ENCODE measurements at regions of chr21 and their contacts with region 1.

Region 1: GRCh38 chr21:25396135-25396711 is 211.1 kb downstream of the MRPL39 start:
- DNase-seq: peak; percentile 89
- H3K4me3 Mint-ChIP-seq: peak overlapping the region; percentile 24
- H3K27ac Mint-ChIP-seq: peak overlapping the region; percentile 77
- H3K4me1 Mint-ChIP-seq: peaks cover 15% of the 10 kb centered on the region
- H3K27me3 Mint-ChIP-seq: no peaks in the 10 kb centered on the region

Region 2: GRCh38 chr21:25360593-25360992 is 35.6 kb before region 1 on chr21:
- CTCF ChIA-PET with region 1: no interaction called
- POLR2A ChIA-PET with region 1: no interaction called
- intact Hi-C with region 1: loop called (anchors 1 kb)
- DNase-seq: peak; percentile 13
- H3K4me3 Mint-ChIP-seq: no peak overlapping the region
- H3K27ac Mint-ChIP-seq: no peak overlapping the region
- H3K4me1 Mint-ChIP-seq: peaks cover 18% of the 10 kb centered on the region
- H3K27me3 Mint-ChIP-seq: peaks cover 2% of the 10 kb centered on the region

Region 3: DNA sequence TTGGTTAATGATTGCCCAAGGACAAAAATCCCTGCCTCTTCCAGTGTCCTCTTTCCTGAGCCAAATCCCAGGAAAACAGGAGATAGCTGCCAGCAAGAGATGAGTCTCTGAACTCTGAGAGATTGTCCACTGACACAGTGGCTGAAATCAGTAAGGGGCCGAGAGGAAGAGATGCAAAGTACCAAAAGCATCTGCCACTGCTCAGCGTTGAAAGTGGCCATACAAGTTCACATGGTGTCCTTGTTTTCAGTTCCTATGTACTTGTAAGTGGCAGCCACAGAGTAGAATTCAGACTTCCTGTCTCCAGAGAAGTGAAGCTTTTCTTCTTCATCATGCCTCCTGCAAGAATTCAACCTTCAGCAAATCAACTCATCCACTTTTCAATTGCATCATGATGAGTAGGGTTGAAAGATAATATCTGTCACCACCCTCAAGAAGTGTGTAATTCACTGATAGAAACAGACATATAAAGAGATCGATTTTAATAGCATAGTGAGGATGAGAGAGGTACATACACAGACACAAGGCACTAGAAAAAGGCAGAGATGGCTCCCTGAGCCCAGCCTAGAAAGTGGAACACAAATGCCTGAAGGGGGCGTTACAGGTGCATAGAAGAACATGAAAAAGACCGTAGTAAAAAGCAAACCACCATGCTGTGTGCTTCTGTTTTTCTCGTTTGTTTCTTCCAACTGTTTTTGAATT is 25.3 kb after region 1 on chr21:
- CTCF ChIA-PET with region 1: interaction called, 3 read pairs
- POLR2A ChIA-PET with region 1: interaction called, 6 read pairs
- intact Hi-C with region 1: loop called (anchors 1 kb)
- DNase-seq: peak; percentile 79
- H3K4me3 Mint-ChIP-seq: peak overlapping the region; percentile 67
- H3K27ac Mint-ChIP-seq: peak overlapping the region; percentile 89
- H3K4me1 Mint-ChIP-seq: peaks cover 62% of the 10 kb centered on the region
- H3K27me3 Mint-ChIP-seq: no peaks in the 10 kb centered on the region

Region 4: DNA sequence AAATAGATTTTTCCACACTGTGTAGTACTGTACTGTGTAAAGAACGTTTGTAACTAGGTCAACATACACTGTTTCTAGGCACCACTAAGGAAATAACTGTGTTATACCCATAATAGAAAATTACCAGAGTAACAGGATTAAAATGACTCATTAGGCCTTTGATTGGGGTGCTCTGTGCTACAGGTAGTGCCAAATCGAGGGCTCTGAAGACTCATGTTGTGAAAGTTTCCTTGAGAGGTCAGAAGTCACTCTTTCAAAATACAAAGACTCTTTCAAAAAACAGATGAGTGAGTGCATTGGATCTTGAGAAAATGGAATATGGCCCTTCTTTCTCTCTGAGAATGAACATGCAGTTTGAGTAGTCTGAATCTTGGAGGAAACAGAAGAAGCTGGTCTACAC is 68.1 kb after region 1 on chr21:
- CTCF ChIA-PET with region 1: no interaction called
- POLR2A ChIA-PET with region 1: no interaction called
- intact Hi-C with region 1: loop called (anchors 2 kb)
- DNase-seq: peak; percentile 38
- H3K4me3 Mint-ChIP-seq: peak overlapping the region; percentile 50
- H3K27ac Mint-ChIP-seq: peak overlapping the region; percentile 94
- H3K4me1 Mint-ChIP-seq: peaks cover 77% of the 10 kb centered on the region
- H3K27me3 Mint-ChIP-seq: no peaks in the 10 kb centered on the region

Region 5: DNA sequence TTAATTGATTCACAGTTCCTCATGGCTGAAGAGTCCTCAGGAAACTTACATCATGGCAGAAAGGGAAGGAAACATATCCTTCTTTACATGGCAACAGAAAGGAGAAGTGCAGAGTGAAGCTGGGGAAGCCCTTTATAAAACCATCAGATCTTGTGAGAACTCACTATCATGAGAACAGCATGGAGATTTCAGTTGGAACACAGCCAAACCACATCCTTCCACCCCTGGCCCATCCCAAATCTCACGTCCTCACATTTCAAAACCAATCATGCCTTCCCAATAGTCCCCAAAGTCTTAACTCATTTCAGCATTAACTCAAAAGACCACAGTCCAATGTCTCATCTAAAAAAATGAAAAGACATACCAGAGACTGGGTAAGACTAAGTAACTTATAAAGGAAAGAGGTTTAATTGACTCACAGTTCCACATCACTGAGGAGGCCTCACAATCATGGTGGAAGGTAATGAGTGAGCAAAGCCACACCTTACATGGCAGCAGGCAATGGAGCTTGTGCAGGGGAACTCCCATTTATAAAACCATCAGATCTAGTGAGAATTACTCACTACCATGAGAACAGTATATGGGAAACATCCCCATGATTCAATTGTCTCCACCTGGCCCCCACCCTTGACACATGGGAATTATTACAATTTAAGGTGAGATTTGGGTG is 105.9 kb after region 1 on chr21:
- CTCF ChIA-PET with region 1: no interaction called
- POLR2A ChIA-PET with region 1: no interaction called
- intact Hi-C with region 1: loop called (anchors 1 kb)
- DNase-seq: peak; percentile 84
- H3K4me3 Mint-ChIP-seq: peak overlapping the region; percentile 39
- H3K27ac Mint-ChIP-seq: peak overlapping the region; percentile 87
- H3K4me1 Mint-ChIP-seq: peaks cover 57% of the 10 kb centered on the region
- H3K27me3 Mint-ChIP-seq: no peaks in the 10 kb centered on the region

Region 6: DNA sequence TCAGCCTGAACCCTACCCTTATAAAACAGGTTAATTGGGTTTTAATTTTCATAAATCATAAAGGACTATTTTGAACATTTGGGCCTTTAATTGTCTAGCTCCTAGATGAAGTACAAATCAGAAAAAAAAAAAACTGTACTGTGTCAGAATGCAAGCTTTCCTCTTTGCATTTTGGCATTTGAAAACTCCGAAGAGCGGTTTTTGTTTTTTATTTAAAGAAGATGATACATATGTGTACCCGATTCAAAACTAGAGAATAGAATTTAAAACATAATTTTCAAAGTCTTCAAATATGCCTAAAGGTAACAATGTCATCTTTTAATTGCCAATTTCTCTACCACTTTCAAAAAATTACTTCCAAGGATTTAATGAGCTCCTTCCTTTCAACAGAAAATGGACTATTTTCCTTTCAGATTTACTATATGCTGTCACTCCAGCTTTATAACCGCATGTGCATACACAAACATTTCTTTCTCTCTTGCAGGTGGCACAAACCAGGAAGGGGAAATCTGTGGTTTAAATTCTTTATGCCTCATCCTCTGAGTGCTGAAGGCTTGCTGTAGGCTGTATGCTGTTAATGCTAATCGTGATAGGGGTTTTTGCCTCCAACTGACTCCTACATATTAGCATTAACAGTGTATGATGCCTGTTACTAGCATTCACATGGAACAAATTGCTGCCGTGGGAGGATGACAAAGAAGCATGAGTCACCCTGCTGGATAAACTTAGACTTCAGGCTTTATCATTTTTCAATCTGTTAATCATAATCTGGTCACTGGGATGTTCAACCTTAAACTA is 177.4 kb after region 1 on chr21:
- CTCF ChIA-PET with region 1: no interaction called
- POLR2A ChIA-PET with region 1: interaction called, 20 read pairs
- intact Hi-C with region 1: loop called (anchors 1 kb)
- DNase-seq: peak; percentile 80
- H3K4me3 Mint-ChIP-seq: peak overlapping the region; percentile 68
- H3K27ac Mint-ChIP-seq: peak overlapping the region; percentile 89
- H3K4me1 Mint-ChIP-seq: peaks cover 80% of the 10 kb centered on the region
- H3K27me3 Mint-ChIP-seq: no peaks in the 10 kb centered on the region

Region 7: GRCh38 chr21:25708467-25709065 is 312.3 kb after region 1 on chr21:
- CTCF ChIA-PET with region 1: no interaction called
- POLR2A ChIA-PET with region 1: no interaction called
- intact Hi-C with region 1: loop called (anchors 2 kb)
- DNase-seq: peak; percentile 48
- H3K4me3 Mint-ChIP-seq: no peak overlapping the region
- H3K27ac Mint-ChIP-seq: no peak overlapping the region
- H3K4me1 Mint-ChIP-seq: peaks cover 4% of the 10 kb centered on the region
- H3K27me3 Mint-ChIP-seq: no peaks in the 10 kb centered on the region